ENCODE measurements at regions of chr16 and their contacts with region 1.

Region 1: GRCh38 chr16:4852207-4852872 is 5.1 kb downstream of the UBN1 start:
- DNase-seq: no peak
- H3K4me3 ChIP-seq: no peak overlapping the region
- H3K27ac ChIP-seq: no peak overlapping the region
- H3K4me1 ChIP-seq: peaks cover 0 to 9% of the 10 kb centered on the region in 2 donors
- H3K27me3 ChIP-seq: no peaks in the 10 kb centered on the region
- CTCF ChIP-seq: no peak
- POLR2A ChIP-seq: no peak

Region 2: GRCh38 chr16:4800290-4801041 is 51.9 kb before region 1 on chr16:
- intact Hi-C with region 1: no loop called
- DNase-seq: no peak
- H3K4me3 ChIP-seq: no peak overlapping the region
- H3K27ac ChIP-seq: no peak overlapping the region
- H3K4me1 ChIP-seq: peaks cover 0 to 11% of the 10 kb centered on the region in 2 donors
- H3K27me3 ChIP-seq: no peaks in the 10 kb centered on the region
- CTCF ChIP-seq: no peak
- POLR2A ChIP-seq: no peak

Region 3: DNA sequence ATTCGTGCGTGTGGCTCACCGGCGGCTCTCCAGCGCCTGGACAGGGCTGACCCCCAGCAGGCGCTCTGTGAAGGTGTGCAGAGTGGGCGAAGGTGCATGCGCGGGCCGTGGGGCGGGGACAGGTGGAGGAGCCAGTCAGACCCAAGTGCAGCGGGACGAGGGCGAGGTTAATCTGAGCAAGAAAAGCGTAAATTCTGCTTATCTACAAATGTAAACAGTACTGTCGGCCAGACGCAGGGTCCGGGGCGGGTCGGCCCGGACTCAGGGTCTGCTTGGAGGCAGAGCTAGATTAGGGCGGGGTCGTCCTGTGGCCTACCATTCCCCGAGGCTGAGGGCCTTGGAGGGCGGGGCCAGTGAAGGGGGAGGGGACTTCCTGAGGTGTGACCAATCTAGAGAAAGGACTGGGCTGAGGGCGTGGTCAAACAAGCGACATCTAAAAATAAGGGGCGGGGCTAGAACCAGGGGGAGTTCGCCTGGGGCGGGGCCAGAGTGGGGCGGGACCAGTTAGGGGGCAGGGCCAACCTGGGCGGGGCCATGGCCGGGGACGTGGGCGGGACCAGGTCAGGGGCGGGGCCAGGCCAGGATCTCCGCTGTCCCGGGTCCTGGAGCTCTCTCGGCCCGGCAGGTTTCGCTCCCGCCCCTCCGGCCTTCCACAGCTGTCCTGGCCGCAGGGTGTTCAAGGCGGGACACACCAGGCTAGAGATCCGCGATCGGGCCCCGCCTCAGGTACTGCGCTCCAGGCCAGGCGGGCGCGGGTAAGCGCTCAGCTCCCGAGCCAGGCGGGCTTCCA is 105.6 kb after region 1 on chr16 and contains the start of gene SEC14L5:
- intact Hi-C with region 1: loop called (anchors 10 kb)
- DNase-seq: peak; percentile 97 to 98
- H3K4me3 ChIP-seq: peak within 1 kb of the TSS; percentile 36 to 51
- H3K27ac ChIP-seq: peak within 1 kb of the TSS; percentile 68 to 76
- H3K4me1 ChIP-seq: peaks cover 3 to 6% of the 10 kb centered on the region in 2 donors
- H3K27me3 ChIP-seq: no peaks in the 10 kb centered on the region
- CTCF ChIP-seq: peak in 1 of 4 experiments; percentile 3
- POLR2A ChIP-seq: peak; percentile 13 to 28
- total RNA-seq, gene SEC14L5: 0.28 to 2.0 TPM in 2 of 4 donors, not detected in the others